AG04450 (cell line): ENCODE measurements at regions of chr1 and their contacts with region 1.

Region 1: DNA sequence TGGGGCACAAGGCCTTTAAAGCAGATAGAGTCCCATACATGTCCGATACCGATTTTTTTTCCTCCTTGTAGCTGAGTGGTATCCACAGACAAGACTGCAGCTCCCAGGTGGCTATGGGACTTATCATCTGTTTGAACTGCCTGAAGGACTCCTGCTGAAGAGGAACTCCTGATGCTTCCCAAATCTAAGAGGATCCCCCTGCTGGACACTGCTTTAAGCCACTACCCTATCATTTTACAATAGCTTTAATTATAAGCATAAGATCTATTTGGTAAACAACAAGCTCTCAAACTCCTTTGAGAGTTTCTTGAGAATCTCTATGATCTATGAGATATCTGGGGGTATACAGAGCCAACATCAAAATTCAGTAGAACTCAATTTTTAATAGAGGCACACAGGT is 11.7 kb downstream of the NDC1 start:
- DNase-seq: no peak
- H3K4me3 ChIP-seq: no peak overlapping the region
- H3K27ac ChIP-seq: no peak overlapping the region
- H3K27me3 ChIP-seq: no peaks in the 10 kb centered on the region
- CTCF ChIP-seq: peak; percentile 50

Region 2: GRCh38 chr1:53485478-53486394 is 340.6 kb before region 1 on chr1:
- CTCF ChIA-PET with region 1: interaction called, 26 read pairs
- POLR2A ChIA-PET with region 1: no interaction called
- DNase-seq: peak; percentile 52
- H3K4me3 ChIP-seq: no peak overlapping the region
- H3K27ac ChIP-seq: no peak overlapping the region
- H3K27me3 ChIP-seq: peaks cover 43% of the 10 kb centered on the region
- CTCF ChIP-seq: peak; percentile 92

Region 3: GRCh38 chr1:53807916-53808315 is 18.5 kb before region 1 on chr1:
- CTCF ChIA-PET with region 1: interaction called, 14 read pairs
- POLR2A ChIA-PET with region 1: no interaction called
- DNase-seq: peak; percentile 75
- H3K4me3 ChIP-seq: no peak overlapping the region
- H3K27ac ChIP-seq: no peak overlapping the region
- H3K27me3 ChIP-seq: no peaks in the 10 kb centered on the region
- CTCF ChIP-seq: no peak